ENCODE measurements at regions of chr14 and their contacts with region 1.

Region 1: GRCh38 chr14:35826218-35826951 is at the start of gene BRMS1L:
- DNase-seq: peak; percentile 98
- H3K4me3 Mint-ChIP-seq: peak within 1 kb of the TSS; percentile 76
- H3K27ac Mint-ChIP-seq: peak within 1 kb of the TSS; percentile 54
- H3K4me1 Mint-ChIP-seq: peaks cover 28% of the 10 kb centered on the region
- H3K27me3 Mint-ChIP-seq: peaks cover 3% of the 10 kb centered on the region
- total RNA-seq, gene BRMS1L: 3.2 to 4.3 TPM

Region 2: GRCh38 chr14:35808076-35808652 is 18.2 kb before region 1 on chr14:
- CTCF ChIA-PET with region 1: interaction called, 23 read pairs
- POLR2A ChIA-PET with region 1: interaction called, 6 read pairs
- DNase-seq: peak; percentile 33
- H3K4me3 Mint-ChIP-seq: peak overlapping the region; percentile 98
- H3K27ac Mint-ChIP-seq: peak overlapping the region; percentile 92
- H3K4me1 Mint-ChIP-seq: peaks cover 29% of the 10 kb centered on the region
- H3K27me3 Mint-ChIP-seq: peaks cover 2% of the 10 kb centered on the region

Region 3: DNA sequence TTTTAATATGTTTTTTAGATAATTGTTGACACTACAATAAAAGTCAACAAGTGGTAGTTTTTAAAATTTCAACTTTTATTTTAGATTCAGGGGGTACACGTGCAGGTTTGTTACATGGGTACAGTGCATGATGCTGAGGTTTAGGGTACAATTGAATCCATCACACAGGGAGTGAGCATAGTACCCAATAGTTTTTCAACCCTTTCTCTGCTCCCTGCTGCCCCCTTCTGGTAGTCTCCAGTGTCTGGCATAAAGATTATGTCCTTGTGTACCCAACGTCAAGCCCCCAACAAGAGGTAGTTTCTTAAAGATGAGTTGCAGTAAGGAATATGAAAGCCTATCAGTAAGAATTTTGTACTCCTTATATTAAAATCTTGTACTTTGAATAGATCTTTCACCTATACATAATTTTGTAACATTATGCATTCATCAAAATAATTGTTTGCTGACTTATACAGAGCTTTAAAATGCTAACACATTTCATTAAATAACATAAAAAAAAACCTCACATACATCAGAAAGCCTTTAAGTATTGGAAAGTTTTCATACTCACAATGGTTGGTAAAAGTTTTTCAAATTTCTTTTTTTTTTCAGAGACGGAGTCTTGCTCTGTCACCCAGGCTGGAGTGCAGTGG is 11.9 kb before region 1 on chr14:
- CTCF ChIA-PET with region 1: interaction called, 21 read pairs
- POLR2A ChIA-PET with region 1: interaction called, 6 read pairs
- DNase-seq: peak; percentile 79
- H3K4me3 Mint-ChIP-seq: no peak overlapping the region
- H3K27ac Mint-ChIP-seq: no peak overlapping the region
- H3K4me1 Mint-ChIP-seq: no peaks in the 10 kb centered on the region
- H3K27me3 Mint-ChIP-seq: peaks cover 2% of the 10 kb centered on the region

Measured in activated CD4-positive, alpha-beta memory T cell treated with anti-CD3 and anti-CD28 coated beads, Interleukin-2, amount 10 ng/mL, durations not matched to agents 7 days and 5 days (primary cell).